ENCODE measurements at regions of chr7 and their contacts with region 1.

Region 1: GRCh38 chr7:44748045-44748947 is at the start of gene ZMIZ2:
- DNase-seq: peak; percentile 93
- H3K4me3 Mint-ChIP-seq: peak within 1 kb of the TSS; percentile 81
- H3K27ac Mint-ChIP-seq: peak within 1 kb of the TSS; percentile 87
- H3K4me1 Mint-ChIP-seq: peaks cover 39% of the 10 kb centered on the region
- H3K27me3 Mint-ChIP-seq: no peaks in the 10 kb centered on the region
- total RNA-seq, gene ZMIZ2: 84.7 to 92.3 TPM

Region 2: GRCh38 chr7:44581879-44582603 is 166.3 kb before region 1 on chr7 and contains the start of gene TMED4:
- CTCF ChIA-PET with region 1: no interaction called
- POLR2A ChIA-PET with region 1: interaction called, 3 read pairs
- intact Hi-C with region 1: loop called (anchors 1 kb)
- DNase-seq: peak; percentile 100
- H3K4me3 Mint-ChIP-seq: peak within 1 kb of the TSS; percentile 91
- H3K27ac Mint-ChIP-seq: peak within 1 kb of the TSS; percentile 91
- H3K4me1 Mint-ChIP-seq: peaks cover 29% of the 10 kb centered on the region
- H3K27me3 Mint-ChIP-seq: peaks cover 3% of the 10 kb centered on the region
- total RNA-seq, gene TMED4: 74.8 to 79.1 TPM

Region 3: GRCh38 chr7:44587843-44588711 is 160.2 kb before region 1 on chr7:
- CTCF ChIA-PET with region 1: interaction called, 3 read pairs
- POLR2A ChIA-PET with region 1: no interaction called
- intact Hi-C with region 1: loop called (anchors 2 kb)
- DNase-seq: peak; percentile 73
- H3K4me3 Mint-ChIP-seq: no peak overlapping the region
- H3K27ac Mint-ChIP-seq: peak overlapping the region; percentile 33
- H3K4me1 Mint-ChIP-seq: peaks cover 8% of the 10 kb centered on the region
- H3K27me3 Mint-ChIP-seq: no peaks in the 10 kb centered on the region

Region 4: DNA sequence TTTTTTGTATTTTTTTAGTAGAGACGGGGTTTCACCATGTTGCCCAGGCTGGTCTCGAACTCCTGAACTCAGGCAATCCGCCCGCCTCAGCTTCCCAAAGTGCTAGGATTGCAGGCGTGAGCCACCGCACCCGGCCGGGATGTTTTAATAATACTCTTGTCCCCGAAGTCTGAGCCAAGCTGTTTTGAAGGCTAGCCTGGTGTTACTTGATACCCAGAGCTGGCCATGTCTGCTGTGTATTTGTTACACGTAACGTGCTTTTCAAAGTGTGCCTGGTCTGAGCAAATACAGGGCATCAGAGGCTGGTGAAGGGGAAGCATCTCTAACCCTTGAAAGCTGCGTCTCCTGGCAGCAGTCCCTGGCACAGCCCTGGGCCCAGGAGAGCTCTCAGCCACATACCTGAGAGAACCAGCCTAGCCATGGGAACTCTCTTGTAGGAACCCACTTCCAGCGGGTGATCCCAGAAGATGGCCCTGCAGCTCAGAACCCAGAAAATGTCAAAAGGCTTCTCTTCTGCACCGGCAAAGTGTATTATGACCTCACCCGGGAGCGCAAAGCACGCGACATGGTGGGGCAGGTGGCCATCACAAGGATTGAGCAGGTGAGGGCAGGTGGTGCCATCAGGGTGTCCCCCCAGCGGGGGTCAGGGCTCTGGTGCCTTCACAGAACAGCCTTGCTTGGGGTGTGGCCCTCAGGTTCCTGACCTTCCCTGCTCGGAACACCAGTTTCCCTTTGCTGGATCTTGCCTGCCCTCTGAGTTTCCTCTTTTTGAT is 41.3 kb before region 1 on chr7:
- CTCF ChIA-PET with region 1: no interaction called
- POLR2A ChIA-PET with region 1: no interaction called
- intact Hi-C with region 1: no loop called
- DNase-seq: no peak
- H3K4me3 Mint-ChIP-seq: no peak overlapping the region
- H3K27ac Mint-ChIP-seq: no peak overlapping the region
- H3K4me1 Mint-ChIP-seq: peaks cover 6% of the 10 kb centered on the region
- H3K27me3 Mint-ChIP-seq: no peaks in the 10 kb centered on the region

Region 5: DNA sequence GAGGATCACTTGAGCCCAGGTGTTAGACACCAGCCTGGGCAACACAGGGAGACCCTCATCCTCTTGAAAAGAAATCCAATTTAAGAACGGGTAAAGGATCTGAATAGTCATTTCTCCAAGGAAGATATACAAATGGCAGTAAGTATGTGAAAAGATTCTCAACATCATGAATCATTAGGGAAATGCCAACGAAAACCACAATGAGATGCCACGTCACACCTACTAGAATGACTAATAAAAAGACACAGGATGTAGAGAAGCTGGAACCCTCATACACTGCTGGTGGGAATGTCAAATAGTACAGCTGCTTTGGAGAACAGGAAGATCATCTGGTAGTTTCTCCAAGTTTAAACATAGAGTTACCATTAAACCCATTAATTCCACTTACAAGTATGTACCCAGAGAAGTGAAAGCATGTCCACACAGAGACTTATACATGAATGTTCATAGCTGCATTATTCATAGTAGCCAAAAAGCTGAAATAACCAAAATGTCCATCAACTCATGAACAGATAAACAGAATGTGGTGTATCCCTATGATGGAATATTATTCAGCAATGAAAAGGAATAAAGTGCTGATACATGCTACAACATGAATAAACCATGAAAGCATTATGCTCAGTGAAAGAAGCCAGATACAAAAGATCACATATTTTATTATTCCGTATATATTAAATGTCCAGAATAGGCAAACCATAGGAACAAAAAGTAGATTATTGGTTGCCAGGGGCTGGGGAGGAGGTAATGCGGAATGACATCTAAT is 12.7 kb before region 1 on chr7:
- CTCF ChIA-PET with region 1: interaction called, 4 read pairs
- POLR2A ChIA-PET with region 1: interaction called, 7 read pairs
- intact Hi-C with region 1: loop called (anchors 1 kb)
- DNase-seq: peak; percentile 62
- H3K4me3 Mint-ChIP-seq: peak overlapping the region; percentile 4
- H3K27ac Mint-ChIP-seq: peak overlapping the region; percentile 73
- H3K4me1 Mint-ChIP-seq: peaks cover 19% of the 10 kb centered on the region
- H3K27me3 Mint-ChIP-seq: no peaks in the 10 kb centered on the region

Region 6: DNA sequence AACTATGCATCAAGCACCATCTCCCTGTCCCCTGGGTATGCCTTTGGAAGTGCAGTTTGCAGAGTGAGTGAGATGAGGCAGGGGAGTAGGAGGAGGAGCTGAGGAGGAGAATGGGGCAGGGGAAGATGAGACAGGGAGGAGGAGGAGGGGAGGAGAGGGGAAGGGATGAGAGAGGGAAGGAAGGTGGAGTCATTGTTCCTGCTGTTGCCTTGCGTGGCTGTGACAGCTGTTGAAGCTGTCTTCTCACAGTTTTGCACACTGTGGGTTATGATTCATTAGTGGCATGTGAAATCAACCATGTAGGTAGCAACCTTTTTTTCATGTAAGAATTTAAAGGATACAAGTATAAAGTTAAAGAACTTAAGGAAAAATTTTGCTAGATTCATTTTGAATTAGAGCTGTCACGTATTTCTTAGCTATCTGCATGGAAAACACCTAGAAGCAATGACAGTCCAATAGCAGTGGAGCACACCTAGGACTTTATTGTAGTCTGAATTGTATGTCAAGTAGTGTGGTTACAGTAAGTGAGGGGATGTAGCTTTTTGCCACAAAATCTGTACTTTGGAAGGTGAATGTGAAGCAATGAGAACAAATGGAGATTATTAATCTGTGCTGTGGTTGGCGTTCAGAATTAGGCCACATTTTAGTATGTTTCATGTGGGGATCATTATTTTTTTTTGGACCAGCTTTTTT is 273.5 kb after region 1 on chr7:
- CTCF ChIA-PET with region 1: no interaction called
- POLR2A ChIA-PET with region 1: no interaction called
- intact Hi-C with region 1: no loop called
- DNase-seq: peak; percentile 44
- H3K4me3 Mint-ChIP-seq: no peak overlapping the region
- H3K27ac Mint-ChIP-seq: peak overlapping the region; percentile 72
- H3K4me1 Mint-ChIP-seq: peaks cover 52% of the 10 kb centered on the region
- H3K27me3 Mint-ChIP-seq: no peaks in the 10 kb centered on the region

Region 7: DNA sequence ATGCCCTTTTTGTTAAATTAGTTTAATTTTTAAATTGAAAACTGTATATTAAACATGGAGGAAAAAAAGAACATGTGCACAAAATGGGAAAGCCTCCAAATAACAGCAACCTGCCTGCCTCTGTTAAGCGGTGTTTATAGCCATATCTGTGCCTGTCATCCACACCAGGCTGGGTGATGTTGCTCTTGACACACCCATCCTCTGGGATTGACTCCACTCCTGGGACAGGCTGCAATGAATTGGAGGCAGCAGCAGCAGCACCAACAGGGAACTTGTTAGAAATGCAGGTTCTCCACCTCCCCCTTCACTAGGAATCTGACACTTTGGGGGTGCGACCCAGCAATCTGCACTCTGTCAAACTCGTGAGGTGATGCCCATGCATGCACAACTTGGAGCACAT is 1288.6 kb after region 1 on chr7:
- CTCF ChIA-PET with region 1: no interaction called
- POLR2A ChIA-PET with region 1: no interaction called
- intact Hi-C with region 1: no loop called
- DNase-seq: no peak
- H3K4me3 Mint-ChIP-seq: no peak overlapping the region
- H3K27ac Mint-ChIP-seq: no peak overlapping the region
- H3K4me1 Mint-ChIP-seq: no peaks in the 10 kb centered on the region
- H3K27me3 Mint-ChIP-seq: no peaks in the 10 kb centered on the region